Endothelial cell of umbilical vein (primary cell): ENCODE measurements at regions of chr3 and their contacts with region 1.

Region 1: GRCh38 chr3:46895204-46895660 is 17.7 kb downstream of the PTH1R start:
- DNase-seq: peak; percentile 56
- H3K4me3 ChIP-seq: no peak overlapping the region
- H3K27ac ChIP-seq: no peak overlapping the region
- H3K4me1 ChIP-seq: peaks cover 6% of the 10 kb centered on the region
- H3K27me3 ChIP-seq: no peaks in the 10 kb centered on the region
- CTCF ChIP-seq: peak; percentile 77 to 89
- POLR2A ChIP-seq: no peak

Region 2: GRCh38 chr3:46663591-46664135 is 231.6 kb before region 1 on chr3:
- CTCF ChIA-PET with region 1: interaction called, 22 read pairs
- POLR2A ChIA-PET with region 1: no interaction called
- dilution Hi-C with region 1: no loop called
- intact Hi-C with region 1: no loop called
- DNase-seq: peak; percentile 46
- H3K4me3 ChIP-seq: no peak overlapping the region
- H3K27ac ChIP-seq: no peak overlapping the region
- H3K4me1 ChIP-seq: no peaks in the 10 kb centered on the region
- H3K27me3 ChIP-seq: no peaks in the 10 kb centered on the region
- CTCF ChIP-seq: peak; percentile 12 to 16
- POLR2A ChIP-seq: no peak

Region 3: DNA sequence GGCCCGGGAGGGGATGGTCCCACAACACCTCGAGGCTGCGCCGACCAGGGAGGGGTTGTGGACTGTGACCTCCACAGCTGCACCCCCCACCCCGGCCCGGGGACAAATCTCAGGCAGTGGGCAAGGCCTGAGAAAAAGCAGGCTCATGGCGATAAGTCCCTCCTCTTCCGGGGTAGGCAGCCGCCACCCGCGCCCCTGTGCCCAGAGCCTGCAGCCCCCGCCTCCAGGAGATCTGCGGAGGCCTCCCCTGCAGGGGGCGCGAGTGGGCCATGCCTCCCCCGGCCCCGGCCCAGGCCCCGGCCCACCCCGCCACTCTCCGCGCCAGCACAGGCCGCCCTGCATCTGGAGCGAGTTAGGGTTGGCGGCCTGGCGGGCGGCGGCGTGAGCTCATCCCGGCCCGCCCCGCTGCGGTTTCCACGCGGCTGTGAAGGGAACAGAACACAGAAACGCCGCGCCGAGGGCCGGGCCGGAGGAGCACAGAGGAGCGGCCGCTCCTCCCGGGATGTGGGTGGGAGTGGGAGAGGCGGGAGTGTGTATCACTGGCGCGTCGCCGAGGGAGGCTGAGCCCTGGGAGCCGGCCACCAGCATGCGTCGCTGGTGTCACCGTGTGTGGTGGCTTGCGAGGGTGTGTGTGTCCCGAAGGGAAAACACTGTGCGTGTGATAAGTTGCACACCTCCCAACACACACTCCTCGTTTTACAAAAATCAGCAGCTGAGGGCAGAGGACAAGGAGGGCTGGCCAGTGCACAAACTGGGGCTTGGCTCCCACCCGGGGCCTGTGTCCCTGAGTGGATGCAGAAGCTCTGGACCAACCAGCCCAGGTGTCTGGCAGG is 49.2 kb before region 1 on chr3:
- CTCF ChIA-PET with region 1: interaction called, 13 read pairs
- POLR2A ChIA-PET with region 1: no interaction called
- dilution Hi-C with region 1: no loop called
- intact Hi-C with region 1: loop called (anchors 1 kb)
- DNase-seq: peak; percentile 56
- H3K4me3 ChIP-seq: peak overlapping the region in 2 of 3 experiments; percentile 19 to 41
- H3K27ac ChIP-seq: peak overlapping the region; percentile 3
- H3K4me1 ChIP-seq: peaks cover 14% of the 10 kb centered on the region
- H3K27me3 ChIP-seq: peaks cover 2 to 8% of the 10 kb centered on the region in 2 experiments
- CTCF ChIP-seq: peak; percentile 33 to 56
- POLR2A ChIP-seq: no peak

Region 4: DNA sequence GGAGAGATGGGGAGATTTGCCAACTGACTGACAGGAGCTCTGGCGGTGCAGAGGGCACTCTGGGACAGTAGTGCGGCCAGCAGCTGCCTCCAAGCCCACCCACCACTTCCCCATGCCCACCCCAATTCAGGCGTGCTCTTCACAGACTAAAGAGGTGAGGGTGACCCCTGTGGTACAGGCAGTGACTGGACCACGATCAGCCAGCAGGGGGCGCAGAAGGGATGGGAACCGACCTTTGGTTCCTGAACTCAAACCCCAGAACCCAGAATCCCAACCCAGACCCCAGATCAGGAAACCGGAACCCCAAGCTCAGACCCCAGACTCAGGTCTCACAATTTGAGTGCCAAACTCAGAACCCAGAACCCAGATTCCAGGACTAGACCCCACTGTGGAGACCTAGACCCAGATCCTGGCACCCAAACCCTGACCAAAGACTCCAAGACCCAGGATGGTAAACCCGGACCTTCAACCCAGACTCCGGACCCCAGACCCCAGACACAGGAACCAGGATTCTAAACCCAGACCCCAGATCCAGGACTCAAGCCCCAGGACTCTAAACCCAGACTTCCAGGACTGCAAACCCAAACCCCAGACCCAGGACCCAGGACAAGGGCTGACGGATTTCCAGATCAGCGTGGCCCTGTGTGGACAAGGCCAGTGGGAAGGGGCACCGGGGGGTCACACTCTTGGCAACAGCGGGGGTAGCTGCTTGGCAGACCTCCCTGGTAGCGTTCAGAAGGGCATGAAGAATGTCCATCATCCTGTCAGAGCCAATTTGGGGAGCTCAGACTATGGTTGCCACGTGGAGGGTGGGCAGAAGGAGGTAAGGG is 28.3 kb before region 1 on chr3:
- CTCF ChIA-PET with region 1: interaction called, 31 read pairs
- POLR2A ChIA-PET with region 1: no interaction called
- dilution Hi-C with region 1: no loop called
- intact Hi-C with region 1: loop called (anchors 1 kb)
- DNase-seq: peak; percentile 38
- H3K4me3 ChIP-seq: no peak overlapping the region
- H3K27ac ChIP-seq: no peak overlapping the region
- H3K4me1 ChIP-seq: no peaks in the 10 kb centered on the region
- H3K27me3 ChIP-seq: no peaks in the 10 kb centered on the region
- CTCF ChIP-seq: peak; percentile 82 to 94
- POLR2A ChIP-seq: no peak

Region 5: GRCh38 chr3:46873521-46873920 is 21.7 kb before region 1 on chr3:
- CTCF ChIA-PET with region 1: interaction called, 31 read pairs
- POLR2A ChIA-PET with region 1: no interaction called
- dilution Hi-C with region 1: no loop called
- intact Hi-C with region 1: no loop called
- DNase-seq: no peak
- H3K4me3 ChIP-seq: no peak overlapping the region
- H3K27ac ChIP-seq: no peak overlapping the region
- H3K4me1 ChIP-seq: no peaks in the 10 kb centered on the region
- H3K27me3 ChIP-seq: peaks cover 0 to 4% of the 10 kb centered on the region in 2 experiments
- CTCF ChIP-seq: no peak
- POLR2A ChIP-seq: no peak

Region 6: GRCh38 chr3:46882377-46883053 is 12.7 kb before region 1 on chr3:
- CTCF ChIA-PET with region 1: interaction called, 19 read pairs
- POLR2A ChIA-PET with region 1: no interaction called
- dilution Hi-C with region 1: no loop called
- intact Hi-C with region 1: loop called (anchors 1 kb)
- DNase-seq: peak; percentile 26
- H3K4me3 ChIP-seq: peak overlapping the region; percentile 12 to 26 (median 21)
- H3K27ac ChIP-seq: no peak overlapping the region
- H3K4me1 ChIP-seq: no peaks in the 10 kb centered on the region
- H3K27me3 ChIP-seq: peaks cover 32 to 44% of the 10 kb centered on the region in 2 experiments
- CTCF ChIP-seq: no peak
- POLR2A ChIP-seq: no peak

Region 7: GRCh38 chr3:46909535-46910442 is 14.6 kb after region 1 on chr3:
- CTCF ChIA-PET with region 1: interaction called, 15 read pairs
- POLR2A ChIA-PET with region 1: no interaction called
- dilution Hi-C with region 1: no loop called
- intact Hi-C with region 1: no loop called
- DNase-seq: peak; percentile 81
- H3K4me3 ChIP-seq: no peak overlapping the region
- H3K27ac ChIP-seq: no peak overlapping the region
- H3K4me1 ChIP-seq: peaks cover 10% of the 10 kb centered on the region
- H3K27me3 ChIP-seq: no peaks in the 10 kb centered on the region
- CTCF ChIP-seq: peak; percentile 87 to 88
- POLR2A ChIP-seq: no peak

Region 8: DNA sequence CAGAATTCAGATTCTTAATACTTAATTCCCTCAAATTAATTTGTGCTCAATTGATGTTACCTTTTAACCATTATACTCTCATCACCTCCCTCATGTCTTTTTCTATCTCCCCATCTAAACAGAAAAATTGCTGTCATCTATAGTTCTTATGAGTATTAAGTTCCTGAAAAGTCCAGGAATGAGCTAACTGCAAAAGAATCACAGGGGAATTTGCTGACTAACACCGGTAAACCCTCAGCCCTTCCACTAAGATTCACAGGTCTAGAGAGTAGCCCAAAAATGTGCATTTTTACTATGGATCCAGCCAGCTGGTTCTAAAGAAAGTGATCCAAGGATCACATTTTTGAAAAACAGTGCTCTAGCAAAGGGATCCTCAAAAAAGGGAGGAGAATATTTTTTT is 201.7 kb after region 1 on chr3:
- CTCF ChIA-PET with region 1: no interaction called
- POLR2A ChIA-PET with region 1: no interaction called
- dilution Hi-C with region 1: no loop called
- intact Hi-C with region 1: no loop called
- DNase-seq: no peak
- H3K4me3 ChIP-seq: no peak overlapping the region
- H3K27ac ChIP-seq: no peak overlapping the region
- H3K4me1 ChIP-seq: no peaks in the 10 kb centered on the region
- H3K27me3 ChIP-seq: no peaks in the 10 kb centered on the region
- CTCF ChIP-seq: no peak
- POLR2A ChIP-seq: no peak